ENCODE measurements at regions of chr18 and their contacts with region 1.

Region 1: DNA sequence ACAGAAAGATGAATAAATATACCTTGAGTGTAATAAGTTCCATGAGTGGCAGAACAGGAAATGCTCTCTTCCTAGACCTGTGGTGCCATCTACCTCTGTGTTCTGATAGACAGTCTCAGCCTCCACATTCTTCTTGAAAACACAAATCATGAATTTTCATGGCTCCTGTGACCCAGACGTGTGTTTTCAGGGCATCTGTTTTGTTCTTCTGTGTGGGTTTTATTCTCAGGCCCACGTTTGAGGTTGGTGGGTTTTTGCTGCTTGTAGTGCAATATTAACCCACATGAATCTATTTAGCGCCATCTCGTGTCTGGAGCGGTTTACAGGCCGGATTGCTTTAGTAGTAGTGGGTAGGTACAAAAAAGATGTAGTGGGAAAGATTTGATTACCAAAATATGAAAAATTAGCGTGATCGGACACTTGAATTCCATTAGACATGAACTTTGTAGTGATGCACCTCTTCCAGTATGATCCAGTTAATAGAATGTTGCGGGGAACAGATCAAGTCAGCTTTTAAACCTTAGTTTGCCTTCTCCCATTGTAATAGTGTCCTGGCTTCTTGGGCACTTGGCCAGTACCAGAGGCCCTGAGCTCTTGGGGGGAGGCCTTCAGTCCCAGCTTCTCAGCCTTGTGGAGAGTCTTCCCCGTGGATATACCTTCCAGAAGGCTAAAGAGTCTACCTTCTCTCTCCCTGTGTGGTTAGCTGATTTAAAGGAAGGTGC is 256.5 kb downstream of the TPGS2 start:
- DNase-seq: peak; percentile 36
- ATAC-seq: peak; percentile 75
- H3K4me3 ChIP-seq: no peak overlapping the region
- H3K27ac ChIP-seq: no peak overlapping the region
- H3K4me1 ChIP-seq: no peaks in the 10 kb centered on the region
- H3K27me3 ChIP-seq: no peaks in the 10 kb centered on the region
- CTCF ChIP-seq: peak; percentile 70

Region 2: GRCh38 chr18:36411745-36412168 is 160.5 kb before region 1 on chr18:
- CTCF ChIA-PET with region 1: no interaction called
- POLR2A ChIA-PET with region 1: no interaction called
- intact Hi-C with region 1: loop called (anchors 1 kb)
- DNase-seq: peak; percentile 44
- ATAC-seq: peak; percentile 37; the same call in 1 of the 2 replicates
- H3K4me3 ChIP-seq: no peak overlapping the region
- H3K27ac ChIP-seq: no peak overlapping the region
- H3K4me1 ChIP-seq: no peaks in the 10 kb centered on the region
- H3K27me3 ChIP-seq: no peaks in the 10 kb centered on the region
- CTCF ChIP-seq: peak; percentile 60

Region 3: DNA sequence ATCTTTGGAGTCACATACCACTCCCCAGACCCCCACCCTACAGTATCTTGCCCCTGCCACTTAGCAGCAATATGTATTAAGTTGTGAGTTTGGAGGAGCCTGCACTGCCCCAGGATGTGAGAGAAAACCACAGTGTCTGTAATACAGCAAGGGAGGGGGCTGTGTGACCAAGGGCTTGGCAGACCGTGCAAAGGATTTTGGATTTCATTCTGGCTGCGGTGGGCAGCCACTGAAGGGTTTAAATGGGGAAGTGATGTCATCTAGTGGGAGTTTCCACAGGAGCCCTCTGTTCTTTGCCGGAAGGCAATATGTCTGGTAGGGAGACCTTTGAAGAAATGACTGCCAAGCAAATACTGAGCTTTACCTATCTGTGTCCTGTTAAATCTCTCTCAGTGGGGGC is 72.4 kb before region 1 on chr18:
- CTCF ChIA-PET with region 1: no interaction called
- POLR2A ChIA-PET with region 1: no interaction called
- intact Hi-C with region 1: loop called (anchors 10 kb)
- DNase-seq: no peak
- ATAC-seq: no peak
- H3K4me3 ChIP-seq: no peak overlapping the region
- H3K27ac ChIP-seq: no peak overlapping the region
- H3K4me1 ChIP-seq: peaks cover under 1% of the 10 kb centered on the region; the same call in 1 of the 2 replicates
- H3K27me3 ChIP-seq: no peaks in the 10 kb centered on the region
- CTCF ChIP-seq: no peak

Region 4: DNA sequence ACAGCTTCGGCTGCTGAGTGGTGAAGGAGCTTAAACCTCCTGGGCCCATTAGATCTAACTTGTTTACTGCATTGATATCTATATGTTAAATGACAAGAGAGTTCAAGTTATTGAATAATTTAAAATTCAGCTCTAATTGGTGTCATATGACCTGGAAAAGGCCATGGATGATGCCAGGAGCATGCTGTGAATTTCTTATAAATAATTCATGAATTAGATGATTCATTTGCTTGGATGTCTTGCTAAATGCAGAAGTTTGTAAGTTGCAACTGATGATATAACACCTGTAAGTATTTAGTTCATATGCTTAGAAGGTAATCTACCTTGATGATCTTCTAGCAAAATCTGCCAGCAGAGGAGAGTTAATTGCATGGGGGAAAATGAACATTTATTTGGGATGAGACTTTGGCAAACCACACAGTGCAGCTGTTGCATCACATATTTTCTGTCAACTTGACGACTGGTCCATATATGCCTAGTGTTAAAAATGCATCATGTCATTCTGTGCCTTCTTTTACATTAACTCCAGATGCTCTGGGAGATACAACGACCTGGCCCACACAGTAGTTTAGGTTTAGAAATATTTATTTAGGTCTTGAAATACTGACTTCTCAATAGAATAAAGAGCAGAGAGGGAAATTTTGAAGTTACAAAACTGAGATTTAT is 483.0 kb after region 1 on chr18:
- CTCF ChIA-PET with region 1: no interaction called
- POLR2A ChIA-PET with region 1: no interaction called
- intact Hi-C with region 1: no loop called
- DNase-seq: no peak
- ATAC-seq: no peak
- H3K4me3 ChIP-seq: no peak overlapping the region
- H3K27ac ChIP-seq: no peak overlapping the region
- H3K4me1 ChIP-seq: no peaks in the 10 kb centered on the region
- H3K27me3 ChIP-seq: no peaks in the 10 kb centered on the region
- CTCF ChIP-seq: no peak

Region 5: DNA sequence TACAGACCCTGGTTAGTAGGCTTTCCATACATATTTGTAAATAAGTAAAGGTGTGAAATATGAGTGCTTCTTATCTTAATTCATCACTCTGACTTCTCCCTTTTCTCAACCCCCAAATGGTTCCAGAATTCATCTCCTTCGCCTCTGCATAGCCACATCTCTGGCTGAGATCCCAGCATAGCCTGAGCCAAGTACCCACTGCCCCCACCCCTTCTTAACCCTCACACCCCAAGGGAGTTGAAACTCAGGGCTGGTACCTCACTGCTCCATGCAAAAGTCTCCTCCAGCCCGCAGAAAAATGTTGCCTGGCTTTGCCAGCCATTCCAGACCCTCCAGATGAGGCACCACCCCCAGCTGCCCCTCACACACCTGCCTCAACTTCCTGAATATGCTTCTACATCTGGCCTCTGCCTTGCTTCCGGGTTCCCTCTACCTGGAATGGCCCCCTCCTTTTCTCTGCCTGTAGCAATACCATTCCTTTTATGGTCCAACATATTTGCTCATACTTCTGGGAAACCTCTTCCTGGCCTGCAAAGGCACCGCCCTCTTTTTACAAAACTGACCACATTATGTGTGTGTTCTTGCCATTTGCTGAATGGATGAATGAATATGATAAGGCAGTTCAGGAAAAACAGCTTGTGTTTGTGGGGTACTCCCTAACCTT is 880.5 kb after region 1 on chr18:
- CTCF ChIA-PET with region 1: no interaction called
- POLR2A ChIA-PET with region 1: no interaction called
- intact Hi-C with region 1: no loop called
- DNase-seq: no peak
- ATAC-seq: no peak
- H3K4me3 ChIP-seq: no peak overlapping the region
- H3K27ac ChIP-seq: no peak overlapping the region
- H3K4me1 ChIP-seq: no peaks in the 10 kb centered on the region
- H3K27me3 ChIP-seq: no peaks in the 10 kb centered on the region
- CTCF ChIP-seq: no peak